Sigmoid colon (tissue), 7 donors: ENCODE measurements at regions of chr2 and their contacts with region 1.

Region 1: DNA sequence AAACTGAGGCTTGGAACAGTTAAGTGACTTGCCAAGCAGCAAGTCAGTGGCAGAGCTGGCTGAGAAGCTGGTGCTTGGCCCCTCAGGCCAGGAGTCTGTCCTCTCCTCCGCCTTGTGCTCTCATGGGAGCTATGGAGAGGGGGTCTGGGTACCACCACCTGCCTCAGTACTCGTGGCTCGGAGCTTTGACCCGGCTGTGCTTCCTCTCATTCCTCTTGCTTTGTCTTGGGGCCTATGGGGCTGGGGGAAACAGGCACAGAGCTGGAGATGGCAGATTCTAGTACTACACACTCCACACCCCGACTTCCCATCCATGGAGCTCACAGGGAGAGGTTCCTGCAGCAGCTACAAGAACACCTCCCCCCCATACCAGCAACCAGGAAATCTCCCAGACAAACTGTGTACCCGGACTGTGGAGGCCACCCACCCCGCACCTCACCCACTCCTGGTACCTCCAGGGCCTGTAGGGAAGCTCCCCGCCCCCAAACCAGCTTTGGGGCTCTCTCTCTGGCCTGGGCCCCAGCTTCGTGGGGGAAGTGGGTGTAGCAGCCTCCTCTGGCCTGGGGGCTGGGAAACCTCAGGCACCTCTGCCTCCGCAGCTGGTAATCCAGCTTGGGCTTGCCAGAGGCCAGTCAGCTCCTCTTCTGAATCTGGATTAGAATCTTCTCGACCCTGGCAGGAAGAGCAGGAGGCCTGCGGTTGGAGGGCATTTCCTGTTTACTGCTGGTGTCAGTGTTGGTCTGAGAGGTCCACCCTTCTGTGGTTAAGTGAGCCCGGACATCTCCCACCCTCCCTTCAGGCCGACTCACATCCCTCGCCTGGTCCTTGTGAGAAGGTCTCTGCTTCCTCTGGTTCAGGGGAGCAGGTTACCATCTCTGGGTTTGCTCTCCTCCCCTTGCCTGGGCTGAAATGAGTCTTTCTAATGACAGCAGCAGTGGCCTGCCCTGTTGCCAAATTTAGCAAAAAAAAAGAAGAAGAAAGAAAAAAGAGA is 22.3 kb upstream of the RHOB start:
- DNase-seq: peak; percentile 76
- H3K4me3 ChIP-seq: no peak overlapping the region
- H3K27ac ChIP-seq: peak overlapping the region; percentile 64 to 90 (median 76)
- H3K4me1 ChIP-seq: peaks cover 0 to 60% (median 54%) of the 10 kb centered on the region in 4 donors
- H3K27me3 ChIP-seq: no peaks in the 10 kb centered on the region
- CTCF ChIP-seq: no peak
- EP300 ChIP-seq: peak in 1 of 4 donors; percentile 27
- POLR2A ChIP-seq: no peak

Region 2: GRCh38 chr2:20040489-20041172 is 384.0 kb before region 1 on chr2:
- intact Hi-C with region 1: no loop called
- DNase-seq: no peak
- H3K4me3 ChIP-seq: no peak overlapping the region
- H3K27ac ChIP-seq: no peak overlapping the region
- H3K4me1 ChIP-seq: peaks cover 0 to 72% (median 63%) of the 10 kb centered on the region in 4 donors
- H3K27me3 ChIP-seq: no peaks in the 10 kb centered on the region
- CTCF ChIP-seq: no peak
- EP300 ChIP-seq: no peak
- POLR2A ChIP-seq: no peak

Region 3: DNA sequence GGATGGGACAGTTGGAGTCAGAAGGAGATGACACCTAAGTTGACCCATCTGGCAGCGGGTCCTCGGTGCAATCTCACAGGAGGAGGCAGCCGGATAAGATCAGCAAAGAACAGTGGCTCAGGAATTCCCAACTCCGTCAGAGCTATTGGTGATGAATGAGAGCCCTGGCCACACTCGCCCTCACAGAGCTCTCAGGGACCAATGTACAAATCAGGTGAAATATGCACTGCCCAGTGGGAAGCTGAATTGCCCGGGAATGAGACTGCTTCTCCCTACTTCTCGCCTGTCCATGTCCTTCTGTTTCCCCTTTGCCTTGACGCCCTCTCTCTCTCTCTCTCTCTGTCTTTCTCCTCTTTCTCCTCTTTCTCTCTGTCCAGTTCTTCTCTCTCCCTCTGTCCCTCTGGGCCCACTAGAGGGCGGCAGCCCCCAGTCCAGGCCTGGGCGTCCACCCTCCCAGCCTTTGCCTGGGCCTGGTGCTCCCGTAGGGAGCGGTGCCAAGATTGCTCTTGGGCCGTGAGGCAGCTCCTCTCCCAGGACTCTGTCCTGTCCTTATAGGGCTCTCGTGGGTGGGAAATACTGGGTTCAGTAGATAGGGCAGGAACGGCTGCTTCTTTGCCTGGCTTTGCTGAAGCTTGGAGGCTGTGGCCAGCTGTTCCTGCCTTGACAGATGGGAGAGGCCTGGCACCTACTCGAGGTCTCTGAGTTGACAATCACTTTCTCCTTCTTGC is 45.6 kb before region 1 on chr2:
- intact Hi-C with region 1: loop called (anchors 5 kb)
- DNase-seq: peak; percentile 96
- H3K4me3 ChIP-seq: no peak overlapping the region
- H3K27ac ChIP-seq: peak overlapping the region; percentile 74 to 83 (median 79)
- H3K4me1 ChIP-seq: peaks cover 0 to 33% (median 29%) of the 10 kb centered on the region in 4 donors
- H3K27me3 ChIP-seq: no peaks in the 10 kb centered on the region
- CTCF ChIP-seq: peak; percentile 80 to 85 (median 83)
- EP300 ChIP-seq: peak in 1 of 4 donors; percentile 29
- POLR2A ChIP-seq: no peak